AG04449 (cell line): ENCODE measurements at regions of chr20 and their contacts with region 1.

Region 1: GRCh38 chr20:38229376-38230252 is 30.9 kb downstream of the KIAA1755 start:
- DNase-seq: no peak
- H3K4me3 ChIP-seq: no peak overlapping the region
- CTCF ChIP-seq: peak; percentile 60

Region 2: GRCh38 chr20:38134387-38135270 is 95.0 kb before region 1 on chr20:
- CTCF ChIA-PET with region 1: no interaction called
- POLR2A ChIA-PET with region 1: no interaction called
- DNase-seq: no peak
- H3K4me3 ChIP-seq: no peak overlapping the region
- CTCF ChIP-seq: no peak

Region 3: DNA sequence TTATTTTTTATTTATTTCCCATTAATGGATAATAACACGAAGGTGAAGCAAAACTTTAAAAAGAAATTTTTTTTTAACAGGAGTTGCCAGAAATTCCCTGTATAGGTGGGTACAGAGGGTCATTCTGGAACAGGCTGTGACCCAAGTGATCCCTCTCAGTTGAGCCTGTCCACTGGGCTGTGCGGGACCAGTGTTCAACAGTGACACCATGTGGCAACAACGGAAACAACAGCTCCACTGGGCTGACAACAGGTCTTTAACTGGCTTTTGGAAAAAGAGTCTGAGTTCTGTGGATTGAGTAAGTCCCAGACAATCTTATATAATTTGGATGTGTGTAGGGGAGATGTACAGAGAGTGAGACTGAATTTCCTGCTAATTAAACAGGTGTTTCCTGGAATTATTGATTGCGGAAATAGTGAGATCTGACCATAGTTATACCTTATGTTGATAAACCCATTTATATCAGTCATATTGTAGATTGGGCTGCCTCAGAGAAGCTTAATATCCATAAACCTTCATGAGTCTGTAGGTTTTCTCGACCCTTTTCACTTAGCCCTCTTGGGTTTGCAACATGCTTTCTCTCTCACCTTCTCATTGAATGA is 13.3 kb after region 1 on chr20:
- CTCF ChIA-PET with region 1: interaction called, 33 read pairs
- POLR2A ChIA-PET with region 1: no interaction called
- DNase-seq: no peak
- H3K4me3 ChIP-seq: no peak overlapping the region
- CTCF ChIP-seq: peak; percentile 47

Region 4: DNA sequence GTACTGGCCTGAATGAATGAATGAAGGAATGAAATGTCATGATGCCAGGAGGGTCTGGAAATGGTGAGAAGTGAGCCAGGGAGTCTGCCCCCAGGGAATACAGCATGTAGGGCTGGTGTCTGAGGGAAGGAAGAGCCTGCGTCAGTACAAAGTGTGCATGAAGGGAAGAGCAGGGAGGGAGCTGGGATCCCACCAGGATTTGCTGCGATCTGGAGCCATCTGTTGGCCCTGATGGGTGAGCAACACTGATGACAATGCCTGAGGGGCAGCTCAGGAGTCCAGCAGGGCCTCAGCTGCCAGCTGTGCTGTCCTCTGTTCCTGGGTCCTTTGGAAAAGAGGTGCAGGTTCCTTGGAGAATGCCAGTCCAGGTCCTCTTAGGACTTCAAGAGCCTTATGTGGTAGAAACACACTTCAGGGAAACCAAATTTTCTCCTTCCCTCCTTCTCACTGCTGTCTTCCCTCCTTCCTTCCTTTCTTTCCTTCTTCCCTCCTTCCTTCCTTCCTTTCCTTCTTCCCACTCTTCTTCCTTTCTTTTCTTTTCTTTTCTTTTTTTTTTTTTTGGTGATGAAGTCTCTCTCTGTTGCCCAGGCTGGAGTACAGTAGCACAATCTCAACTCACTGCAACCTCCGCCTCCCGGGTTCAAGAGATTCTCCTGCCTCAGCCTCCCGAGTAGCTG is 85.8 kb after region 1 on chr20:
- CTCF ChIA-PET with region 1: interaction called, 250 read pairs
- POLR2A ChIA-PET with region 1: no interaction called
- DNase-seq: peak; percentile 3
- H3K4me3 ChIP-seq: no peak overlapping the region
- CTCF ChIP-seq: peak; percentile 37

Region 5: GRCh38 chr20:38321959-38322598 is 92.5 kb after region 1 on chr20:
- CTCF ChIA-PET with region 1: interaction called, 96 read pairs
- POLR2A ChIA-PET with region 1: no interaction called
- DNase-seq: no peak
- H3K4me3 ChIP-seq: no peak overlapping the region
- CTCF ChIP-seq: peak; percentile 58